ENCODE measurements at regions of chr12 and their contacts with region 1.

Region 1: DNA sequence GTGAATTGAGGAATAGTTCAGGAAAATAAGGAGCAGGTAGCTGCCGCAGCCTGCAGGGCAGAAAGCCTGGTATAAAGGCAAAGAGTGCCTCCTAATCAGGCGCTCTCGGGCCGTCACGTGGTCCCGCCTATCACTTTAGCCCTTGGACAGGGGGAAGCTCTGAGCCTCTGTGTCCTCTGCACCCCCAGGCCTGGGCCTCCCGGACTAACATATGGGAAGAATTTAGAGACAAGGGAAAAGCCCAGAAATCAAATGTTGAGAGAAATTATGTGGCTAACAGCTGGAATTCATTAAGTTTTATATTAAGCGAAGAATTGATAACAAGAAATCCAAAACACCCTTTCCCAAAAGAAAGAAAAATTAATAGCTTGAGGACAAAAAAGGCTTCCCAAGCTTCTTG is 417.7 kb downstream of the ATP23 start:
- DNase-seq: peak in 4 of 5 donors; percentile 27 to 83 (median 64)
- H3K4me3 ChIP-seq: no peak overlapping the region
- H3K27ac ChIP-seq: no peak overlapping the region
- H3K4me1 ChIP-seq: no peaks in the 10 kb centered on the region
- H3K27me3 ChIP-seq: no peaks in the 10 kb centered on the region
- CTCF ChIP-seq: no peak

Region 2: DNA sequence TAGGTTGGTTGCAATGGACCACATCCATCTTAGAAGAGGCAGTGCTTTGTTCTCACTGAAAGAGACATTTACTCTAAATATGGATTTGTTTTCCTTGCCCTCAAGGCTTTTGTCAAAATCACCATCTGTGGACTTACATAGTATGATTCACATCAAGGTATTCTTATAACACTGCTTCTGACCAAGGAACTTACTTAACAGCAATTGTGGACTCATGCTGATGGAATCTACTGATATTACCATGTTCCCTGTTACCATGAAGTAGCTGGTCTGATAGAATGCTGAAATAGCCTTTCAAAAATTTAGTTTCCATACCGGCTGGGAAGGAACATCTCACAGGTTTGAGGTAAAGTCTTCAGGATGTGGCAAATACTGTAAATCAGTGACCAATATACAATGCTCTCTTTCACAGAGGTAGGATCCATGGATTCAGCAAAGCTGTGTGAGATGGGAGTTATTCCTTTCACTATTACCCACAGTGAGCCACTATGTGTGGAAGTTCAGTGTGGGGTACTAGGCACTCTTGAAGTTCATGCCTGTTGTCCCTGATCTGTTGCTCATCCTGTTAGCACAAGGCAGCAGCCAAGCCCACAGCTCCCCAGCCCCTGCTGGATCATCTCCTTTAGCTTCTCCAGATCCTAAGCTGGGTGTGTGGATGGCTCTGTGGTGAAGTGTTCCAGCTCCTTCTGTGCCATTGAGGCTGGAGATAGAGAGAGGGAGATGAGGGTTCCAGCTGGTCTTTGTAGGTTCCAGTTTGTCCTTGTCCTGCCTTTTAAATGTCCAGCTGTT is 291.3 kb before region 1 on chr12:
- intact Hi-C with region 1: no loop called
- DNase-seq: no peak
- H3K4me3 ChIP-seq: no peak overlapping the region
- H3K27ac ChIP-seq: no peak overlapping the region
- H3K4me1 ChIP-seq: no peaks in the 10 kb centered on the region
- H3K27me3 ChIP-seq: no peaks in the 10 kb centered on the region
- CTCF ChIP-seq: no peak

Region 3: GRCh38 chr12:58529897-58530741 is 171.0 kb after region 1 on chr12:
- intact Hi-C with region 1: loop called (anchors 10 kb)
- DNase-seq: no peak
- H3K4me3 ChIP-seq: no peak overlapping the region
- H3K27ac ChIP-seq: no peak overlapping the region
- H3K4me1 ChIP-seq: no peaks in the 10 kb centered on the region
- H3K27me3 ChIP-seq: no peaks in the 10 kb centered on the region
- CTCF ChIP-seq: no peak